OCI-LY7 (cell line): ENCODE measurements at regions of chr16 and their contacts with region 1.

Region 1: DNA sequence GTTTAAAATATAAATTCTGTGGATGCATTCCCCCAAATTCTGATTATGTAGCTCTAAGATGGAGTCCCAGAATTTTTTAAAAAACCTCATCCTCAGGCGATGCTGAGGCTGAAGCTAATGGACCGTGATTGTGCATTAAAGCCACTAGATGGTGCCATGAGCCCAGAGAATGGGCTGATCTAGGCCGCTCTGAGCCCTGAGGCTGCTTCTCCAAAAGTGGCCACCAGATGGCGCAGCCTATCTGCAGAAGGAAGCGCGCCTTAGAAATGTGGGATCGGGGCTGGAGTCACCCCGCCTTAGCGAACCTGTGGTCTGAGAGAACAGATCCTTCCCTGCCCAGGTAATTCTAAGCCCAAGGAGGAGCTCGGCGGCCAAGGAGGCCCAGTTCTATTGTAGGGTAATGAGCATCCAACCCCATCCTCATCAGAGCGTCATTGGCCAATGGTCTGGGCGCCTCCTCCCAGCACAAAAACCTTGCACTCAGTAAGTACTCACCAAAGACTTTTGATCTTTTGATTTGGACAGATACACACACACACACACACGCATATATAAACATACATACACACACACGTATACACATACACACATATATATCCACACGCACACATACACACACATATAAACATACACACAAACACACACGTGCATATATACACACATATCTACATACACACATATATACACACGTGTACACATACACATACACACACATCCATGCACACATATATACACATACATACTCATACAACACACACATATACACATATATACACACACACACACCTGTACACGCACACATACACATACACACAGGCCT is 13.7 kb upstream of the MMP2 start:
- DNase-seq: peak; percentile 82
- H3K4me3 ChIP-seq: no peak overlapping the region
- H3K27ac ChIP-seq: no peak overlapping the region
- H3K4me1 ChIP-seq: no peaks in the 10 kb centered on the region
- CTCF ChIP-seq: peak; percentile 100

Region 2: DNA sequence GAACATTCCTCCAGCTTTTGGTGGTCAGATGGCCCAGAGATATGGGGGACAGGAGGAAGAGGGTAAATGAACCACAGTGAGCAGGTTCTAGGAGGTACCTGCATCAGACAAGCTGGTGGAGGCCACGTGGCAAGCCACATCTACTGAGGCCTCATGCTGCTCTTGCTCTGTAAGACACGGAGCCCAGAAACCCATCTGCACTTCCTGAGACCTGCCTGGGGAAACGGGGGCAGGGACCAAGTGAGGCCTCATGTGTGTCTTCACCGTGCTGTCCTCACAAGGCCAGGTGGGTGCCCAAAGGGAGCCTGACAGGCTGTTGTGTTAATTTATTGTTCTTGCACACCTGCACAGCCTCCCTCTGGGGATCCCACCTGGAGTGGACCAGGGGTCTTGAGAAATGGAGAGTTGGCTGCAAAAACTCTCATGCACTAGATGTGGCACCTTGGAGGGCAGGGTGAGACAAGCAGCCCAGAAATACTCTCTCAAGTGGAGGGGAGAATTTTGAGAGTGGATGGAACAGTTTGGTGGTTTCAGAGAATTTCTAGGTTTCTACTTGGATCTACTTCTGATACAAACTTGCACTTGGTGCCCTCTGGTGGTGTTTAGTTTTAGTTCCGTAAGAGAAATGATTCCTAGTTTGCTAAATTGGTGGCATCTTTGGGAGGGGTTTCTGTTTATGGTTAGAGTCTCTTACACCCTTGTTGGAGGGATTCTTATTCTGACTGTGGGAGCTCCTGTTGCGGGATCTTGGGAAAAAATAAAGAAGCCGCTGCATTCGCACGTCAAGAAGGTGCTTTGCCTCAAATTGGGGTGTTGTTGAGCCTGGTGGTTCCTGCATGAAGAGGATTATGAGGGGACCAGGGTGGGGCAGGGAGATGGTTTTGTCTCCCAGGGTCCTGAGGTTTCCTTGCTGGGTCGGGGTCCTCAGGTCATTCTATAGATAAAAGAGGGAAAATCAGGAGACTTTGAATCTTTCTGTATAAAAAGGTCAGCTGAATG is 238.0 kb after region 1 on chr16:
- CTCF ChIA-PET with region 1: interaction called, 6 read pairs
- POLR2A ChIA-PET with region 1: no interaction called
- intact Hi-C with region 1: loop called (anchors 1 kb)
- DNase-seq: peak; percentile 44
- H3K4me3 ChIP-seq: no peak overlapping the region
- H3K27ac ChIP-seq: no peak overlapping the region
- H3K4me1 ChIP-seq: no peaks in the 10 kb centered on the region
- CTCF ChIP-seq: peak; percentile 75

Region 3: GRCh38 chr16:55842369-55843104 is 377.2 kb after region 1 on chr16:
- CTCF ChIA-PET with region 1: no interaction called
- POLR2A ChIA-PET with region 1: no interaction called
- intact Hi-C with region 1: loop called (anchors 2 kb)
- DNase-seq: peak; percentile 55
- H3K4me3 ChIP-seq: no peak overlapping the region
- H3K27ac ChIP-seq: no peak overlapping the region
- H3K4me1 ChIP-seq: no peaks in the 10 kb centered on the region
- CTCF ChIP-seq: peak; percentile 89